BJ (cell line): ENCODE measurements at regions of chr5 and their contacts with region 1.

Region 1: GRCh38 chr5:116370886-116371285 is 203.7 kb downstream of the SEMA6A start:
- DNase-seq: no peak
- H3K4me3 ChIP-seq: no peak overlapping the region
- H3K27me3 ChIP-seq: no peaks in the 10 kb centered on the region
- CTCF ChIP-seq: no peak

Region 2: GRCh38 chr5:116320486-116320885 is 50.4 kb before region 1 on chr5:
- CTCF ChIA-PET with region 1: no interaction called
- POLR2A ChIA-PET with region 1: no interaction called
- DNase-seq: no peak
- H3K4me3 ChIP-seq: no peak overlapping the region
- H3K27me3 ChIP-seq: no peaks in the 10 kb centered on the region
- CTCF ChIP-seq: no peak

Region 3: DNA sequence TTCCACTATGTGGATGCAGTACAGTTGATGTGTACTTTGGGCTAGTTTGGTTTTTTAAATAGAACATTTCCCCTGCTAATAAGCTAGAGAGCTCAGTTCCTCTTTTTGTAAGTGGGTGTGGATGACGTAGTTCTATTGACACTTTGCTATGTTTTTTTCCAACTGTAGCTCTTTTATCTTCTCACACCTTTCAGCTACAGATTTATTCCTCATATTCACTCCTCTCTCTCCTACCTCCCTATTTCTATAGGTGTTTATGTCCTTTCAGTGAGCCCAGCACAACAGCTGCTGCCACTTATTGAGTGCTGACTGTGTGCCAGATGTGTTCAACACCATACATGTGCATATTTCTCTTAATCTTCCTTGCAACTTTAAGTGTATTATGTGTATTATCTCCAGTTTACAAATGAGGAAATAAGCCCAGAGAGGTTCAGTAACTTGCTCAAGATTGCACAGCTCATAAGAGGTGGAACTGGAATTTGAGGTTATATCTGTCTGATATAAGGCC is 11.9 kb before region 1 on chr5:
- CTCF ChIA-PET with region 1: interaction called, 12 read pairs
- POLR2A ChIA-PET with region 1: no interaction called
- DNase-seq: no peak
- H3K4me3 ChIP-seq: no peak overlapping the region
- H3K27me3 ChIP-seq: no peaks in the 10 kb centered on the region
- CTCF ChIP-seq: no peak

Region 4: DNA sequence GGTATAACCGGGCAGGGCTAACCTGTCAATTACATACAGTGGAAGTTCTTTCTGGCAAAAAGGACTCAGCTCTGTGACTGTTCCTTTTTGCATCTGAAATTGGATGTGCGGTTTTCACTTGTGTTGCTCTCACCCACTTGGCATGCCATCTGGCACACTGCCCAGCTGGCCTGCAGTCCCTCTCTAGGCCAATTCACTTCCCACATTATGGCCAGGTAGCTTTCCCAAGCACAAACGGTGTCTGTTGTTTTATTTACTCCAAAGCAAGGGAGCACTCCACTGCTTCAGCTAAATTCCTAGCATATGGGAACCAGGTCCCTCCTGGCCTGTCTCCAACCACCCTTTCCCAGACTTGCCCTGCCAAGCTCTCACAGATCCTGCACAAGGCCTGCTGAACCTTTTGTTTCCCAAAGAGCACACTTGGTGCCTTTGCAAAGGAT is 71.2 kb after region 1 on chr5:
- CTCF ChIA-PET with region 1: no interaction called
- POLR2A ChIA-PET with region 1: no interaction called
- DNase-seq: no peak
- H3K4me3 ChIP-seq: no peak overlapping the region
- H3K27me3 ChIP-seq: no peaks in the 10 kb centered on the region
- CTCF ChIP-seq: no peak